ENCODE measurements at regions of chr1 and their contacts with region 1.

Region 1: DNA sequence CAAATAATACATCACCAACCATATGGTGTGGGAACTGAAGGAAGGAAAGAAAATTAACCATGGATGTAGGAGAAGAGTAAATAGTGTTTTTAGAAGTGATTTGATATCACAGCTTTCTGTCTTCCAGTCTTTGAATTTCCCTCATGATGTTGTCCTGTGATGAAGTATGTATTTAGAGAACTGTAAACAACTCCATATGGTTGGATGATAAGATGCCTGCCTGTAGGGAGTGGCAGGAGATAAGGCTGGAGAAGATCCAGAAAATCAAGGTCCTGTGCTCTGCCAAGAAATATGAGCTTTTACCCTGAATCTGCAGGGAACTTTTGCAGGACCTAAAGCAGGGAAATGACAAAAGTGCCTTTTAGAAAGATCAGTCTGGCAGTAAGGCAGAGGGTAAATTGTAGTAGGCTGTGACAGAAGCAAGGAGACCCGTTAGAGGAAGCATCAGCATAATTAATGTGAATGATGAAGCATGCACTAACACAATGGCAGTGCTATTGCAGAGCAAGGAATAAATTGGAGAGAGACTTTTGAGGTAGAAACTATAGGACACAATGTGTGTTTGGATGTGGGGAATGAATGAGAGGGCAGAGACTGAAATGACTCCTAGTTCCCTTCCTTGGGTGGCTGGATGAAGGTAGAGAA is 21.9 kb downstream of the CEPT1 start:
- DNase-seq: no peak
- H3K4me3 Mint-ChIP-seq: no peak overlapping the region
- H3K27ac Mint-ChIP-seq: no peak overlapping the region
- H3K4me1 Mint-ChIP-seq: peaks cover 15% of the 10 kb centered on the region
- H3K27me3 Mint-ChIP-seq: no peaks in the 10 kb centered on the region

Region 2: DNA sequence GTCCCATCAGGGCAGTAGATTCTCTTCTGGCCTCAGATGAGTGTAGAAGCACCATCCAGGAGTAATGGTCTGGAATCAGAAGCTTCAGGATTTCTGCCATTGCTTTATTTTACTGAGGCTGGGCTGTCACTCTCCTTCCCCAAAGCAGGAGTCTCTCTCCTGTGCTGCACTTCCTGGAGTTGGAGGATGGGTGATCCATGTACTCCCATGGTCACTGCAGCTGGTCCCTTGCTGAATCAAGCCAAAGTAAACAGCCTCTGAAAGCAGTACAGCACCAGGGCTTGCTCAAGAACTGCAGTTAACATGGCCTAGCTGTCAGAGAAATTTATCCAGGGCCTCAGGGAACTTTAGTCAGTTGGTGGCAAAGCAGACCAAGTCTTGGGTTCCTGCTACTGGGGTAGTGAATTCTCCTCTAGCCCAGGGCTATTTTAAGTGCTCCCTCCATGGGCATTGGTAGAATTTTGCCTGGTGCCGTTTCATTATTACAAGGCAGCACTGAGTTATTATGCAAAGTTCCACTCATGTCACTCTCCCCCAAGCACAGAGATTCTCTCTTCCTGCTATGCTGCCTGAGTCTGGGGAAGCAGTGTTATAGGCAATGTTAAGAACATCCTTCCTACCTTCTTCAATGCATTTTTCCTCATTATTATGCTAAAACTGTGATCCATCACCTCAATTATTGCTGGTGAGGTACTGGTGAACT is 51.6 kb before region 1 on chr1:
- CTCF ChIA-PET with region 1: no interaction called
- intact Hi-C with region 1: no loop called
- DNase-seq: no peak
- H3K4me3 Mint-ChIP-seq: no peak overlapping the region
- H3K27ac Mint-ChIP-seq: no peak overlapping the region
- H3K4me1 Mint-ChIP-seq: no peaks in the 10 kb centered on the region
- H3K27me3 Mint-ChIP-seq: no peaks in the 10 kb centered on the region

Region 3: GRCh38 chr1:111148376-111148881 is 13.5 kb before region 1 on chr1:
- CTCF ChIA-PET with region 1: interaction called, 5 read pairs
- intact Hi-C with region 1: loop called (anchors 2 kb)
- DNase-seq: no peak
- H3K4me3 Mint-ChIP-seq: no peak overlapping the region
- H3K27ac Mint-ChIP-seq: no peak overlapping the region
- H3K4me1 Mint-ChIP-seq: peaks cover 78% of the 10 kb centered on the region
- H3K27me3 Mint-ChIP-seq: no peaks in the 10 kb centered on the region

Region 4: GRCh38 chr1:111334169-111334568 is 172.2 kb after region 1 on chr1:
- CTCF ChIA-PET with region 1: no interaction called
- intact Hi-C with region 1: no loop called
- DNase-seq: peak; percentile 76
- H3K4me3 Mint-ChIP-seq: no peak overlapping the region
- H3K27ac Mint-ChIP-seq: no peak overlapping the region
- H3K4me1 Mint-ChIP-seq: no peaks in the 10 kb centered on the region
- H3K27me3 Mint-ChIP-seq: no peaks in the 10 kb centered on the region